Ovary (tissue), 10 donors: ENCODE measurements at regions of chr3 and their contacts with region 1.

Region 1: DNA sequence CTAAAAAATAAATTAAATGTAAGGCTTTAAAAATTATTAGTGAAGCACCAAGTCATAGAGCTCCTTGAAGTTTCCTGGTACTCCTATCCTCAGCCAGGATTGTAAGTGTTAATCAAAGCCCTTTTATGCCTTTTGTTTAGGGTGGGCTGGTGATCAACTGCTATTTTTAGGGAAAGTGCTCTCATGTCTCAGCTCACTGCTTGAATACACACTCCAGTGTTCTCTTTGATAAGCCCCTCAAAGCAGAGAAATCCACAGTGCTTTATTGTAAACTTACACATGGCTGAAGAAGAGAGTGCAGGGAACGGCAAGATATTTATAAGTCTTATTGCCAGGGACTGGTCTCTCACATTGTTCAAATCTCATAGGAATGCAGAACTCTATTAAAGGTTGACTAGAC is 156.4 kb upstream of the AZI2 start:
- DNase-seq: no peak
- H3K4me3 ChIP-seq: no peak overlapping the region
- H3K27ac ChIP-seq: no peak overlapping the region
- H3K4me1 ChIP-seq: no peaks in the 10 kb centered on the region
- H3K27me3 ChIP-seq: no peaks in the 10 kb centered on the region
- CTCF ChIP-seq: no peak
- EP300 ChIP-seq: no peak
- POLR2A ChIP-seq: no peak

Region 2: DNA sequence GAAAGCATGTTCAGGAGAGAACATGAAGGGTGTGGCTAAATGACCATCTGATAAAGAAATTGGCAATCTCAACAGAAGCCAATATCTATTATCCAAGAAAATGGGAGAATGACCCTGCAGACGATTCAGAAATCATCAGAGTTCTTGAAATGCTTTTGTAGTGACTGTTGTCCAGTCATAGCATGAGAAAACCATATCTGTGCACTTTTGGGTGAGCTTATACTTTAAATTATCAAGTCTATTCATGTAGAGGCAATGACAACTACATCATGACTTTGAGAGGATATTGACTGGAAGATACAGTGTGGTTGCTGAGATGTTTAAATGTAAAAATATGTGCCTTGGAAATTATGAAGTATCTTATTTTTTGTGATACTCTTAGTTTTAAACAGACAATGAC is 98.7 kb before region 1 on chr3:
- intact Hi-C with region 1: loop called in 1 of 4 experiments (anchors 10 kb)
- DNase-seq: no peak
- H3K4me3 ChIP-seq: no peak overlapping the region
- H3K27ac ChIP-seq: no peak overlapping the region
- H3K4me1 ChIP-seq: no peaks in the 10 kb centered on the region
- H3K27me3 ChIP-seq: no peaks in the 10 kb centered on the region
- CTCF ChIP-seq: no peak
- EP300 ChIP-seq: no peak
- POLR2A ChIP-seq: no peak

Region 3: GRCh38 chr3:28808068-28808467 is 303.1 kb after region 1 on chr3:
- intact Hi-C with region 1: no loop called
- DNase-seq: no peak
- H3K4me3 ChIP-seq: no peak overlapping the region
- H3K27ac ChIP-seq: no peak overlapping the region
- H3K4me1 ChIP-seq: no peaks in the 10 kb centered on the region
- H3K27me3 ChIP-seq: no peaks in the 10 kb centered on the region
- CTCF ChIP-seq: no peak
- EP300 ChIP-seq: no peak
- POLR2A ChIP-seq: no peak